PC-3 (cell line): ENCODE measurements at regions of chr5 and their contacts with region 1.

Region 1: GRCh38 chr5:57173185-57174127 is at the start of gene GPBP1:
- DNase-seq: peak; percentile 90
- ATAC-seq: peak; percentile 77
- H3K4me3 ChIP-seq: peak within 1 kb of the TSS; percentile 98
- H3K27ac ChIP-seq: peak within 1 kb of the TSS; percentile 98
- H3K4me1 ChIP-seq: no peaks in the 10 kb centered on the region
- H3K27me3 ChIP-seq: no peaks in the 10 kb centered on the region
- CTCF ChIP-seq: no peak
- total RNA-seq, gene GPBP1: 29.5 and 31.8 TPM in 2 replicates

Region 2: GRCh38 chr5:56909294-56910209 is 263.9 kb before region 1 on chr5 and contains the start of gene SETD9:
- CTCF ChIA-PET with region 1: no interaction called
- POLR2A ChIA-PET with region 1: no interaction called
- intact Hi-C with region 1: loop called (anchors 2 kb)
- DNase-seq: peak; percentile 92
- ATAC-seq: peak; percentile 88
- H3K4me3 ChIP-seq: peak within 1 kb of the TSS; percentile 83
- H3K27ac ChIP-seq: peak within 1 kb of the TSS; percentile 69
- H3K4me1 ChIP-seq: peaks cover 6% of the 10 kb centered on the region
- H3K27me3 ChIP-seq: no peaks in the 10 kb centered on the region
- CTCF ChIP-seq: no peak
- total RNA-seq, gene SETD9: 4.5 and 6.0 TPM in 2 replicates

Region 3: GRCh38 chr5:57221049-57221568 is 47.7 kb after region 1 on chr5:
- CTCF ChIA-PET with region 1: no interaction called
- POLR2A ChIA-PET with region 1: interaction called, 6 read pairs
- intact Hi-C with region 1: loop called (anchors 2 kb)
- DNase-seq: peak; percentile 72
- ATAC-seq: peak; percentile 56
- H3K4me3 ChIP-seq: no peak overlapping the region
- H3K27ac ChIP-seq: no peak overlapping the region
- H3K4me1 ChIP-seq: peaks cover 10% of the 10 kb centered on the region
- H3K27me3 ChIP-seq: no peaks in the 10 kb centered on the region
- CTCF ChIP-seq: peak; percentile 76